ENCODE measurements at regions of chr19 and their contacts with region 1.

Region 1: DNA sequence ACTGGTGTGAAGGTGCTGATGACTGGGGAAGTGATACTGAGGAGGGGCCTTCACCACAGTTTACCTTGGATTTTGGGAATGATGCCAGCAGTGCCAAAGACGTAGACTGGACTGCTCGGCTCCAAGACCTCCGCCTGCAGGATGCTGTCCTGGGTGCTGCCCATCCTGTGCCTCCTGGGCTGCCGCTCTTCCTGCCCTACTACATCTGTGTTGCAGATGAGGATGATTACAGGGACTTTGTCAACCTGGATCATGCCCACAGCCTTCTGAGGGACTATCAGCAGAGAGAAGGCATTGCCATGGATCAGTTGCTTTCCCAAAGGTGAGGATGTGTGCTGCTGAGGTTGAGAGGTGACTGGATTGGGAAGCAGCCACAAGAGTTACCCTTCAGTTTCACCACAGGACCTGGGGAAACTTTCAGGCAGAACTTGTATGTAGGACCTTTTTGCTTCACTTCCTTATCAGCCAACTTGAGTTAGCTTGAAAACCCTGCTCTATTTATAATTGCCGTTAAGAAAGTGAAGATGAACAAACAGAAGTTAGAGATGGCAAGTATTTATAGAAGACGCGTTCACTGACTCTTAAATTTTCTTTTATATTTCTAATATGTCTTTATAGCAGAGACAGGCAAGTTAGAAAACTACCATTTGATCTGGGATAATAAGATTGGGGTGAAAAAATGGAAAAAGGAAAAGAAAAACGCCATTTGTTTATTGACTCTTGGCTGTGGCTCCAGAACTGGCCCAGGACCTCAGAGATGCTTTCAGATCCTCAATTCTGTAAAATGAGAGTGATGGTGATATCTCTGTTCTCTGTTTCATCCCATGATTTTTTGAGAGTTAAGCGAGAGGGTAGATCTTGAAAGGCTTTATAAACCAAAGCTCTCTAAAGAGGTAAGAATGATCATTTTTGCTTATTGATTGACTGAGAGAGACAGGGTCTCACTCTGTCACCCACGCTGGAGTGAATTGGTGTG is 5.3 kb downstream of the PDCD2L start:
- DNase-seq: no peak
- ATAC-seq: no peak
- H3K4me3 ChIP-seq: no peak overlapping the region
- H3K4me3 Mint-ChIP-seq: no peak overlapping the region
- H3K27ac ChIP-seq: no peak overlapping the region
- H3K27ac Mint-ChIP-seq: no peak overlapping the region
- H3K4me1 ChIP-seq: peaks cover 5% of the 10 kb centered on the region
- H3K4me1 Mint-ChIP-seq: peaks cover 16% of the 10 kb centered on the region
- H3K27me3 ChIP-seq: no peaks in the 10 kb centered on the region
- H3K27me3 Mint-ChIP-seq: no peaks in the 10 kb centered on the region
- CTCF ChIP-seq: no peak

Region 2: GRCh38 chr19:34393629-34394028 is 15.8 kb before region 1 on chr19:
- CTCF ChIA-PET with region 1: no interaction called
- POLR2A ChIA-PET with region 1: interaction called, 3 read pairs
- intact Hi-C with region 1: loop called in 1 of 2 experiments (anchors 2 kb)
- DNase-seq: no peak
- ATAC-seq: no peak
- H3K4me3 ChIP-seq: no peak overlapping the region
- H3K4me3 Mint-ChIP-seq: no peak overlapping the region
- H3K27ac ChIP-seq: no peak overlapping the region
- H3K27ac Mint-ChIP-seq: no peak overlapping the region
- H3K4me1 ChIP-seq: no peaks in the 10 kb centered on the region
- H3K4me1 Mint-ChIP-seq: no peaks in the 10 kb centered on the region
- H3K27me3 ChIP-seq: no peaks in the 10 kb centered on the region
- H3K27me3 Mint-ChIP-seq: no peaks in the 10 kb centered on the region
- CTCF ChIP-seq: no peak